Right ventricle myocardium inferior (tissue), 1 donor: ENCODE measurements at regions of chr1 and their contacts with region 1.

Region 1: GRCh38 chr1:110412576-110412975 is 5.1 kb upstream of the LAMTOR5 start:
- DNase-seq: peak; percentile 79
- ATAC-seq: peak; percentile 75

Region 2: GRCh38 chr1:110235834-110236682 is 176.5 kb before region 1 on chr1:
- intact Hi-C with region 1: no loop called
- DNase-seq: no peak
- ATAC-seq: no peak

Region 3: GRCh38 chr1:110495926-110496600 is 83.5 kb after region 1 on chr1:
- intact Hi-C with region 1: loop called (anchors 2 kb)
- DNase-seq: no peak
- ATAC-seq: peak; percentile 75